ENCODE measurements at regions of chr12 and their contacts with region 1.

Region 1: GRCh38 chr12:39467432-39467870 is 24.5 kb upstream of the KIF21A start:
- DNase-seq: peak; percentile 13
- H3K4me3 Mint-ChIP-seq: no peak overlapping the region
- H3K27ac Mint-ChIP-seq: peak overlapping the region; percentile 39
- H3K4me1 Mint-ChIP-seq: peaks cover 16% of the 10 kb centered on the region
- H3K27me3 Mint-ChIP-seq: peaks cover 2% of the 10 kb centered on the region

Region 2: DNA sequence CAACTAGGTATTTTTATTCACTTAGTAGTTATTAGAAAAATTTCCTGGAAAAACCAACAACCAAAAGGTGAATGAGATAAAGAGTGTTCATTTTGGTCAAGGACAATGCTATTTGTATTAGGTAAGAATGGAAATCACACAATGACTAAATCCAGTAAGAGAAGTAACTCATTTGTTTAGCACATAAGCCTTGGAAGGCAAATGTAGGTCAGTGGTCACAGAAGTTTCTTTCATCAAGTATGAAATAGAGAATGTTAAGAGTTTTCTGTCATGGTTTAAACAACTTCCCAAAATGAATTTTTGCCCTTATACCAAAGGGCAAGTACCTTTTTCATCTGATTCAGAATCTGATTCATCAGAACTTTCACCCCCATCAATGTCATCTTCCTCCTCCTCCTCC is 126.3 kb before region 1 on chr12:
- CTCF ChIA-PET with region 1: no interaction called
- POLR2A ChIA-PET with region 1: no interaction called
- intact Hi-C with region 1: loop called (anchors 1 kb)
- DNase-seq: no peak
- H3K4me3 Mint-ChIP-seq: no peak overlapping the region
- H3K27ac Mint-ChIP-seq: peak overlapping the region; percentile 23
- H3K4me1 Mint-ChIP-seq: peaks cover 16% of the 10 kb centered on the region
- H3K27me3 Mint-ChIP-seq: no peaks in the 10 kb centered on the region